HEK293T (cell line): ENCODE measurements at regions of chr19 and their contacts with region 1.

Region 1: GRCh38 chr19:43446746-43447489 is 18.5 kb downstream of the LYPD3 start:
- DNase-seq: peak; percentile 80

Region 2: DNA sequence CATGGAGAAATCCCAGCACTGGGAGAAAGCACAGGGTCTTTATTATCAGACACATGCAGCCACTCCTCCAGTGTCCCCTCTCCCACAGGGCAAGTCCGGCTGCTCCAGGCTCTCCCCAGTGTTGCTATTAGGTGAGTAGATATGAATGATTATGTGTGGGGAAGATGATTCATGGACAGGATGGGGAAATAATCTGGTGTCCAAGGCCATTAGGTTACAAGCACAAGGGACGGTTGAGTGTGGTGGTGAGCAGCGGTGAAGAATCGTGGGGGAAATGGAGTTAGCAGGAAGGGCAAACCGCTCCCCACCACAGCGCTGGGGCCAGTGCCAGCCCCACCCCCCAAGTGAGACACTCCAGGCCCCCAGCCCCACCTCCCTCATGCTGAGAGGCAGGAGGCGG is 74.5 kb before region 1 on chr19:
- CTCF ChIA-PET with region 1: no interaction called
- POLR2A ChIA-PET with region 1: no interaction called
- DNase-seq: no peak

Region 3: GRCh38 chr19:43503501-43504425 is 56.8 kb after region 1 on chr19:
- CTCF ChIA-PET with region 1: interaction called, 10 read pairs
- POLR2A ChIA-PET with region 1: interaction called, 3 read pairs
- DNase-seq: peak; percentile 98

Region 4: DNA sequence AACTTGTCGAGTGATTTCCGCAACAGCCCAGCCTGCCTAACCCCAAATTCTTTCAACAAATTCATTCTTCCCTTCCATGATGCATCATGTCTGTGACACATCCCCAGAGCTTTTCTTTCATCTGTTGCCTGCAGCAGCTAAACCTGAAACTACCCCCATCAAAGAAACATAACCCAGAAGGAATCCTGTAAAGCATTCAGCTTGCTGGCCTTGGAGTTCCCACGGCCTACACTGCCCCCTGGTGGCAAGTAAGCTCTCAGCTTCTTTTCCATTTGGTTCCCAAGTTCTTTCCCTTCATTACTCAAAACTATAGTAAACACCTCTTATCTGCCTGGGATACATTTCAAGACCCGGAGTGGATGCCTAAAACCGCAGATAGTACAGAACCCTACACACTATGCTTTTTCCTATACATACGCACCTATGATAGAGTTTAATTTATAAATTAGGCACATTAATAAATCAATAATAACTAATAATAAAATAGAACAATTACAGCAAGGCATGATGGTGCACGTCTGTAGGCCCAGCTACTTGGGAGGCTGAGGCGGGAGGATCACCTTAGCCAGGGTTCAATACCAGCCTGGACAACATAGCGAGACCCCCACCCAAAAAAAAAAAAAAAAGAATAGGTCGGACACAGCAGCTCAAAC is 72.6 kb after region 1 on chr19:
- CTCF ChIA-PET with region 1: interaction called, 63 read pairs
- POLR2A ChIA-PET with region 1: interaction called, 5 read pairs
- DNase-seq: peak; percentile 77

Region 5: DNA sequence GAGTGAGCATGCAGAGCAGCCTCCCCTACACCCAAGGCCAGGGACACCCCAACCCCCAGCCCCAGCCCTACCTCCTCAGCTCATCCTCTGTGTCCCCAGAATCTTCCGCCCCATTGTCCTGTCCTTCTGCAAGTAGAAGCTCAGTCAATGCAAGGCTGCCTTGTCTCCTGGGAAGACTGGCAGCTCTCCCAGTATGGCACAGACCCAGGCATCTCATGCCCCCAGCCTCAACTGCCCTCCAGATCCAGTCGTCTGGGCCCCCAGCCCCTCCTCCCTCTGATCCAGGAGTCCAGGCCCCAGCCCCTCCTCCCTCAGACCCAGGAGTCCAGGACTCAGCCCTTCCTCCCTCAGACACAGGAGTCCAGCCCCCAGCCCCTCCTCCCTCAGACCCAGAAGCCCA is 99.1 kb after region 1 on chr19:
- CTCF ChIA-PET with region 1: no interaction called
- POLR2A ChIA-PET with region 1: no interaction called
- DNase-seq: no peak